ENCODE measurements at regions of chr10 and their contacts with region 1.

Region 1: GRCh38 chr10:42753126-42753506 is 29.5 kb upstream of the BMS1 start:
- DNase-seq: peak; percentile 85
- H3K4me3 ChIP-seq: peak overlapping the region; percentile 45
- H3K27ac ChIP-seq: no peak overlapping the region
- H3K4me1 ChIP-seq: peaks cover 13% of the 10 kb centered on the region
- H3K27me3 ChIP-seq: peaks cover 39% of the 10 kb centered on the region
- CTCF ChIP-seq: peak; percentile 85

Region 2: GRCh38 chr10:43093423-43094076 is 340.4 kb after region 1 on chr10:
- CTCF ChIA-PET with region 1: no interaction called
- POLR2A ChIA-PET with region 1: no interaction called
- intact Hi-C with region 1: loop called (anchors 5 kb)
- DNase-seq: peak; percentile 79
- H3K4me3 ChIP-seq: no peak overlapping the region
- H3K27ac ChIP-seq: no peak overlapping the region
- H3K4me1 ChIP-seq: peaks cover 25% of the 10 kb centered on the region
- H3K27me3 ChIP-seq: no peaks in the 10 kb centered on the region
- CTCF ChIP-seq: peak; percentile 51

Region 3: DNA sequence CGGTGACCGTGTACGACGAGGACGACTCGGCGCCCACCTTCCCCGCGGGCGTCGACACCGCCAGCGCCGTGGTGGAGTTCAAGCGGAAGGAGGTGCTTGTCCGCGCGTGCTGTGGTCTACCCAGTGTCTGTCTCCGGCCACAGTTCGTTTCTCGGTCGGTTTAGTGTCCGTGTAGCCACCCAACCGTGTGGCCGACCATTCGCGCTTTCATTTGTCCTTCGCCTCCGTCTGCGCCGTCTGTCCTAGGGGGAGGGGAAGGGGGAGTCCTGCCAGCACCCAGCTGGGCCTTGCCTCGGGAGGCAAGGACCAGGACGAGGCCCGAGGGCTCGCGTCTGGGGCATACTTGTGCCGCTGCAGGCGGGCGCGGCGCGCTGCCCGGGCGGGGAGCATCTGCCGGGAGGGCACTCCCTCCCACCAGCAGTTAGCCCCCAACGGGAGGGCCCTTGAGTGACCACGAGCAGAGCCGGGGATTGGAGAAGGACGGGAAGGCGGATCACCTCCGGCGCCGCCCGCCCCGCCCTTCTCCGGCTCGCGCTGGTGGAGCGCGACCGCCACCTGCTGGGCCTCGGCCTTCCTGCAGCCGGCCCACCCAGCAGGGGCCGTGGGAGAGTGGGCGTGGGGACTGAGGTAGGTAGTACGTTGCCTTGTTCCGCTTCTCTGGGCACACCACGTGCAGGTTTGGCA is 352.1 kb after region 1 on chr10:
- CTCF ChIA-PET with region 1: interaction called, 4 read pairs
- POLR2A ChIA-PET with region 1: no interaction called
- intact Hi-C with region 1: loop called (anchors 2 kb)
- DNase-seq: peak; percentile 82
- H3K4me3 ChIP-seq: peak overlapping the region; percentile 45
- H3K27ac ChIP-seq: no peak overlapping the region
- H3K4me1 ChIP-seq: peaks cover 4% of the 10 kb centered on the region
- H3K27me3 ChIP-seq: no peaks in the 10 kb centered on the region
- CTCF ChIP-seq: peak; percentile 98

Measured in A673 (cell line).